GM10248 (cell line): ENCODE measurements at regions of chr2 and their contacts with region 1.

Region 1: GRCh38 chr2:97806738-97807618 is 93.6 kb downstream of the ZAP70 start:
- DNase-seq: peak; percentile 73
- CTCF ChIP-seq: peak; percentile 93

Region 2: DNA sequence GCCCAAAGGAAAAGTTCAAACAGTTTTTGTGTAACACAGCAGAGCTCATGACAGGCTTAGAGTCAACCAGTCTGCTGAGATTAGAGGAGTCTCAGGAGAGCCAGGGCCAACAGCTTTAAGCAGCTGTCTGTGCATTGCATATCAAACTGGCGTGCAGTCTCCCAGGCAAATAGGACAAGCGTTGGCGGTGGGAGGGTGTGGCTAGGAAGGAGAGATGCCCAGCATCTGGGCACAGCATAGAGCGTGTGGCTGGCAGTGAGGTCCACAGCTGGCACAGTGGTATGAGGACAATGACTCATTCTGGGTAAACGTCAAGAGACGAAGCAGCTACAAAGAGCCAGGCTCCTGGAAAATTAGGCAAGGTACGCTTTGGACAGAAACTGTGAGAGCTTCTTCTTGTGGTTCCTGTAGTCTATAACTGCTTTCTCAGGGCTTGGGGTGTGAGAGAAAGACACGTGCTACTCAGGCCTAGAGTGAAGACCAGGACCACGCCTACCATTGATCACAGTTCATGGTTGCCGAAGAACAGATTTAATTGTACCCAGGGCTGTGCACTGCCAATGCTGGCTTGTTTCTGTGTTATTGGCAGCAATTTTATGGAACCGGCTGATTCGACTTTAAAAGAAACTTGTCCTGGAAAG is 78.8 kb before region 1 on chr2:
- CTCF ChIA-PET with region 1: no interaction called
- POLR2A ChIA-PET with region 1: no interaction called
- DNase-seq: no peak
- CTCF ChIP-seq: no peak

Region 3: DNA sequence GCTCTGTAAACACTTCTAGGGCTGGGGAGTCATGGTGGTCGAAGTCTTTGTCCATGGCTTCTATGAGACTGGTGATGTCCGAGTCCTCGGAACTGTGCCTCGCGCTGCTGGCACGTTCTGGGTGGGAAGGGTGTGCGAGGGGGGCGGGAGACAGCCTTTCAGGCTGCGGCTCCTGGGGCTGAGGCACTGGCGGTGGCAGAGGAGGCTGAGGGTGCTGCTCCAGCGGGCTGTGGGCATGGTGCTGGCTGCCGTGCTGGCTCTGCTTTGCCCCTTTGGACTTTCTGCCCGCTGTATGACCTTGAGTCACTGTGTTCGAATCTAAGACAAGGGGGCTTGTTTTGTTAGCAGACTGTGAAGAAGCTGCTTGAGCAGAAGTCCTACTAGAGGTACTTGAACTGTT is 14.6 kb before region 1 on chr2:
- CTCF ChIA-PET with region 1: interaction called, 16 read pairs
- POLR2A ChIA-PET with region 1: no interaction called
- DNase-seq: no peak
- CTCF ChIP-seq: no peak

Region 4: DNA sequence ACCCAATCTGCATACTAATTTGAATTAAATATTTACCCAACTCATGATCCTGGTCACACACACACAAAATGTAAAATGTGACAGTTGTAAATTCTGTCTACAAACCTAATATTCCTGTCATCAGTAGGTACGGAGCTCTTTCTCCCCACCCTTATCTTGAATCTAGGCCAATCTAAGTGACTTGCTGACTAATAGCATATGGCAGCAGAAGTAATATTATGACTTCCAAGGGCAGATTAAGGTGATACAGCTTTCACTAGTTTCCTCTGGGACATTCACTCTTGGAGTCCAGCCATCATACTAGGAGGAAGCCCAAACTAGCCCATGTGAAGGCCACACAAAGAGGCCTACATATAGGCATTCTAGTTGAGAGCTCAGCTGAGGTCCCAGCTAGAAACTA is 99.3 kb after region 1 on chr2:
- CTCF ChIA-PET with region 1: interaction called, 17 read pairs
- POLR2A ChIA-PET with region 1: no interaction called
- DNase-seq: no peak
- CTCF ChIP-seq: no peak

Region 5: GRCh38 chr2:98385050-98385699 is 578.2 kb after region 1 on chr2:
- CTCF ChIA-PET with region 1: interaction called, 23 read pairs
- POLR2A ChIA-PET with region 1: no interaction called
- DNase-seq: peak; percentile 84
- CTCF ChIP-seq: peak; percentile 97